ENCODE measurements at regions of chr1 and their contacts with region 1.

Region 1: DNA sequence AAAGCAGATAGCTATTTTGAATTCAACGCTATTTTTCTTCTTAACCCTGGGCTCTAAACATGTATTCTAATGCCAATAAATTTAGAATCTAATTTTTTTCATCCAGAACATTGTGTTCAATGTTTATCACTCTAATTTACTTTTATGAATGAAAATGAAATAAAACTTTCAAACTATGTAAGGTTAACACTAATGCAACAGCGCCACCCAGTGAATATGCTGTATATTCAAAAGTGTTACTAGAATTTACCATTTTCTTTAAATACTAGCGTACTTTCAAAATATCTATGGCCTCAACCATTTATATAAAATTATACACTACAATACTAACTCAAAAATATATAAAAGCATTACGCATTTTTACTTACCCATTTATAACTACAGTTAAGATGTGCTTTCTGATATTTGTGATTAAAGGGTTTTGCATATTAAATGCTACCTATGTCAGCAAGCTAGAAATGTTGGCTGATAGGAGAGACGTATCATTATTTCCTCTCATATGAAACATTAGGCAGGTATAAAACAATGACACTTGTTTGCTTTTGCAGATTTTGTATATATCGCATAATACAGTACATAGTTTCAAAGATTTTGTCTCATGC is 5.9 kb upstream of the NUF2 start:
- DNase-seq: peak; percentile 24
- H3K4me3 ChIP-seq: no peak overlapping the region
- H3K27ac ChIP-seq: no peak overlapping the region
- H3K4me1 ChIP-seq: no peaks in the 10 kb centered on the region
- H3K27me3 ChIP-seq: no peaks in the 10 kb centered on the region
- CTCF ChIP-seq: peak; percentile 64

Region 2: GRCh38 chr1:162168249-162168648 is 1147.6 kb before region 1 on chr1:
- intact Hi-C with region 1: no loop called
- DNase-seq: peak; percentile 29
- H3K4me3 ChIP-seq: no peak overlapping the region
- H3K27ac ChIP-seq: no peak overlapping the region
- H3K4me1 ChIP-seq: no peaks in the 10 kb centered on the region
- H3K27me3 ChIP-seq: no peaks in the 10 kb centered on the region
- CTCF ChIP-seq: no peak

Region 3: GRCh38 chr1:162861101-162861500 is 454.8 kb before region 1 on chr1 and contains the start of gene CCDC190:
- intact Hi-C with region 1: loop called (anchors 5 kb)
- DNase-seq: no peak
- H3K4me3 ChIP-seq: no peak within 1 kb of the TSS
- H3K27ac ChIP-seq: no peak within 1 kb of the TSS
- H3K4me1 ChIP-seq: no peaks in the 10 kb centered on the region
- H3K27me3 ChIP-seq: no peaks in the 10 kb centered on the region
- CTCF ChIP-seq: no peak
- total RNA-seq, gene CCDC190: not detected

Region 4: DNA sequence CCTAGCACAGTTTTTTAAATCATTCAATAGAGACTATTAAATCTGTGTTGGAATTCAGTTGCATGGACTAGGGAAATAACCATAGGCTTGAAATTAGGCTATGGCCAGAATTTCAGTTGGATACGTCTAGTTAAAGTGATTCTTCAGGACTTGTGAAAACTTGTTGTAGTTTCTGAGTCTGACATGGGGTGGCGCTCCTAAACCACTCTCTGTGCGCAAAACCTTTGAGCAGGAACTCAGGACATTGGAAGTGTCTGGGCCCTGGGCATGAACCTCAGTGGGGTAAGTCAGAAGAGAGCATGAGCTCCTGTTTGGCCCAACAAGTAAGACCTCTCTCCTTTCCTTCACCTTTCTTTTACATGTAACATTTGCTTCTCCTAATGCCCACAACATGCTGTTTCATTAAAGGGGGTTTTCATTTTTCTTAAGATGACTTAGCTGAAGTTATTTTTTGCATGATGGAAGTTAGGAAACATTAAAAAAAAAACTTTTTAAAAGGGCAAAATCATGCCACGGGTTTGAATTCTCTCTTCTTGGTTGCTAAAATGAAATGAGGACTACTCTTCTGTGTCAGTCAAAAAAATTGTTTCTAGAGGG is 437.8 kb before region 1 on chr1:
- intact Hi-C with region 1: loop called (anchors 5 kb)
- DNase-seq: peak; percentile 51
- H3K4me3 ChIP-seq: no peak overlapping the region
- H3K27ac ChIP-seq: no peak overlapping the region
- H3K4me1 ChIP-seq: no peaks in the 10 kb centered on the region
- H3K27me3 ChIP-seq: no peaks in the 10 kb centered on the region
- CTCF ChIP-seq: peak; percentile 19

Region 5: DNA sequence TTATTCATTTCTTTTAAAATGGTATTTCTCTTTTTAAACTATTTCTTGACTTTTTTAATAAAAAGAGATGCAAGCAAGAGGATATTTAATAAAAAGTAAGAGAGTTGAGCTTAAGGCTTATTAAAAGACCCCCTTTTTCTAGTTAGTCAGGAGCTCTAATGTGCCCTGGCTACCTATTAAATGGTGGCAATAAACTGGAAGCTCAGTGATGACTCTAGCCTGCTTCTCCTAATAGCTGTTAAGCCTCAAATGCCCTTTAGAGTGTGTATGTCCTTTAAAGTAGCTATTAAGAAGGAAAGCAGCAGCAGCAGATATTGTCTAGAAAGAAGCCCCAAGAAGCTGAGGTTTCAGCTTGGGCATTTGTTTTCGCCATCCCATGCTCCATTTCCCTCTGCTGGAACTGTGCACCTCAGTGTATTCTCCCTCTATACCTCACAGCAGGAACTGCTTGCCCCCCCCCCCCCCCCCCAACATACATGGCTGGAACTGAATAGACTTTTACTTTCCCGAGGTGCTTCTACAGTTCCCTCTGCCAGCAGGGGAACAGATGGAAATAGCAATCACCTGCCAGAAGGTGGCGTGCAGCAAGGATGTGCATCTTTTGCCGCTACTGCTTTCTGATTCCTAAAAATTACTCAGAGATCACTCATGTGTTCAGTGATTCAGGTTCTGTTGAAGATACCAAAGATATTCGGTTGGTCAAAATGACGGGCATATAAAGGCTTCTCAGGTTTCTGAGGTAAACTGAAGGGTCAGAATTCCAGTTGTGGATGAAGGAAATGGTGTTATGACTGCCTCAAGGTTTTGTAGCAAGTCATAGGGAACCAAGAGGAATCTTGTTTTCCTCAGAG is 244.2 kb before region 1 on chr1:
- intact Hi-C with region 1: loop called (anchors 5 kb)
- DNase-seq: peak; percentile 41
- H3K4me3 ChIP-seq: no peak overlapping the region
- H3K27ac ChIP-seq: no peak overlapping the region
- H3K4me1 ChIP-seq: no peaks in the 10 kb centered on the region
- H3K27me3 ChIP-seq: no peaks in the 10 kb centered on the region
- CTCF ChIP-seq: peak; percentile 39

Region 6: DNA sequence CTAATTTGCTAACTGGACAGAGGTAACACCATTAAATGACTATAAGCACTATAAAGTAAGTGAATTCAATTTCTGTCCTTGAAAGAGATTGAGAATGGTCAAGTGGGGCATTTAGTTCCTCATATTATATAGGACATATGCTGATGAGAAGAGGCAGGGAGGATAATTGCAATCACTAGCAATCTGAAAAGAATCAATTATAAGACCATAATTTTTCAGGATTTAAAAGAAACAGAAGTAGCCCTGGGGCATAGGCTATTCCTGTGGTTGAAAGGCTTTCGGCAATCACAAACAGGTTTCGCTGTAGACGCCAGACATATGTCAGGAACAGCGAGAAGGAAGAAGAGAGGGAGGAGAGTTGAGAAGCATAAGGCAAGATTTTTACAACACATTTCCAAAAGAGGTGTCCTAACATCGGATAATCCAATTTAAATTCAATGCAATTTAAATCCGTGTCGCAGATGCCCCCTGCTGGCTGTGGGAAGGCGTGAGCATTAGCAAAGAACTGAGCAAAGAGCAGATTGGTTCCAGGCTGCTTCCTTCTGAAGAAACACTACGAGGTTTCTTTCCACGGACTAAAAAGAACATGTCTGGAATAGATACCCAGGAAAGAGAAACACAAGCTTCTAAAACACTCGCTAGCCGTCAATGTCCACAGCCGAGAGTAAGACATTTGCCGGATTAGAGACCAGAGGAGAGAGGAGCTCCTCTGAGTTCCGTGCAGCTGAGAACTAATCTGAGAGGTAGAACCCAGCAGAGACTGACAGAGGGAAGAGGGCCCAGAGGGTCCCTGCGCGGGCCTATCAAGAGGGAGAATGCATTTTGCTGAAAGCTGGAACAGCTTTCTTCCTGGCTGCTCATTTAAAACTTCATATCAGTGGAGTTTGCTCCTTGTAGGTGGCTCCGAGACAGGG is 141.1 kb before region 1 on chr1:
- intact Hi-C with region 1: loop called (anchors 10 kb)
- DNase-seq: peak; percentile 60
- H3K4me3 ChIP-seq: no peak overlapping the region
- H3K27ac ChIP-seq: no peak overlapping the region
- H3K4me1 ChIP-seq: no peaks in the 10 kb centered on the region
- H3K27me3 ChIP-seq: no peaks in the 10 kb centered on the region
- CTCF ChIP-seq: peak; percentile 78

Measured in colonic mucosa (tissue), 4 donors.